Calu3 (cell line): ENCODE measurements at regions of chr10 and their contacts with region 1.

Region 1: DNA sequence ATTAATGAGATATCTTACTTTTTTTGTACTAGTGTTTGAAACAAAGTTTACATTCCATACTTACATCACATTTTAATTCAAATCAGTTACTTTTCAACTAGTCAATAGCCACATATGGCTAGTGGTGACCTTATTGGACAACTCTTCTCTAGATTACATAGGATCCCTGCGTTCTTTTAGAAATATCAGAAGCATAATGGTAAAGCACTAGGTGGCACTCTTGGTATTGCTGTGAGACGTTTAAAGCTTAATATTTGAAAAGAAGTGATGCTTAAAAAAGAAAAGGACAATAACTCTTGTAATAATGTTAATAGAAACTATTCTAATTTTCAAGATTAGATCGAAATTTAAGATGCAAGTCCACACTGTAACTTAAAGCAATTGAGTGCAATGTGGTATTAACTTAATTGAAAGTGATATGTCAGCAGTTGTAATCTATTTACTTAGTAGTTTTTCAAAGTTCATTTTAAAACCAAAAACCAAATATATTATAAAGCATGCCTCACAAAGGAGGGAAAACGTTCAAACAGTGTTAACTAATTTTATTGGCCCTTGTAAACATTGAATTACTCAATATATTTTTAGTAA is 339.1 kb downstream of the ATRNL1 start:
- DNase-seq: no peak
- H3K4me3 Mint-ChIP-seq: no peak overlapping the region
- H3K27ac Mint-ChIP-seq: no peak overlapping the region
- H3K4me1 Mint-ChIP-seq: no peaks in the 10 kb centered on the region
- H3K27me3 Mint-ChIP-seq: no peaks in the 10 kb centered on the region
- CTCF ChIP-seq: no peak

Region 2: DNA sequence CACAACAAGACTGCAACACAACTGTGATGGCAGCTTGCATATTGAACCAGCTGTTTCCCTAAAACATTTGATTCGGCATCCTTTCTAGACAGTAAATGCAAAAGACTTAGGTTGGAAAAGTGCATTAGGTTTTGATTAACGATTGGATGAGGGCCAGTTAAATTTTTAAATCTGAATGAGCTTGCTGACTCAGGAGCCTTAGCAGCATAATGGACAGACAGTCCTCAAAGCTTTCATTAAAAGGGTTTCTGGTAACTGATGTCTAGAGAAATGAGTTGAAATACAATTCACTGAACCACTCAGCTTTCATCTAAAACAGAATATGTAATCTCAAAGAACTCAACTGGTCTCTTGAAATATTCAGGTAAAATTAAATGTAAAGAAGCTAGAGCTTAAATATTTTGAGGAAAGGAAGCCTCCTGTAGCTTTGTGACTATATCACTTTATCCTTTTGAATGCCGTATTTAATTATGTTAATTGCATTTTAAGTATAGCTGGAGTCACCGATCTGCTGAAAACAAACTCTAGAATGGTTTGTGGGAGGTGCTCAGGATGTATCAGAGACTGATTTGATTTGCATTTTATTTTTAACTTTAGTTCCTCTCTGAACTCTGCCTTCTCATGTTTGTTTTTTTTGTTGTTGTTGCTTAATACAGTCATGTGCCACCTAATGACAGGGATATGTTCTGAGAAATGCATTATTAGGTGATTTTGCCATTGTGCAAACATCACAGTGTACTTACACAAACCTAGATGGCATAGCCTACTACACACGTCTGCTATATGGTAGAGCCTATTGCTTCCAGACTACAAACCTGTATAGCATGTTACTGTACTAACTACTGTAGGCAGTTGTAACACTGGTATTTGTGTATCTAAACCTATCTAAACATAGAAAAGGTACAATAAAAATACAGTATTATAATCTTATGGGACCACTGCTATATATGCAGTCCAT is 368.3 kb before region 1 on chr10:
- CTCF ChIA-PET with region 1: no interaction called
- intact Hi-C with region 1: no loop called
- DNase-seq: no peak
- H3K4me3 Mint-ChIP-seq: no peak overlapping the region
- H3K27ac Mint-ChIP-seq: no peak overlapping the region
- H3K4me1 Mint-ChIP-seq: peaks cover 8% of the 10 kb centered on the region
- H3K27me3 Mint-ChIP-seq: peaks cover 33% of the 10 kb centered on the region
- CTCF ChIP-seq: no peak

Region 3: DNA sequence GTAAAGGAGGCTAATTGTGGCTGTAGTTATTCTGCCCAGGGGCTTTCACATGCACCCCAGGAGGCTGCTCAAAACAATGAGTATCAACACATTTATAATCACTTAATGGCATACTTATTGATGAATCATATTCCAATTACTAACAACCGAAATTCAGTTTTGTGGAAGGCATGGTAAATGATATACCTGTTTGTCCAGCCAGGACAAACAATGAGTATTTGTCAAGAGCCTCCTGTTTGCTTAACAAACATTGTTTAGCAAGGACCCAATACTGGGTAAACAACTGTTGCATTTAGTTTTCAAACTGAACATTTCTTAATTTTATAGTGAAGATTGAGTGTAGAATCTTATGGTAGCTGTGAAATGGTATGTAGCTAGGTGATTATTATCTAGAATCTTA is 134.5 kb after region 1 on chr10:
- CTCF ChIA-PET with region 1: no interaction called
- intact Hi-C with region 1: loop called (anchors 5 kb)
- DNase-seq: peak; percentile 2
- H3K4me3 Mint-ChIP-seq: no peak overlapping the region
- H3K27ac Mint-ChIP-seq: no peak overlapping the region
- H3K4me1 Mint-ChIP-seq: no peaks in the 10 kb centered on the region
- H3K27me3 Mint-ChIP-seq: no peaks in the 10 kb centered on the region
- CTCF ChIP-seq: no peak

Region 4: DNA sequence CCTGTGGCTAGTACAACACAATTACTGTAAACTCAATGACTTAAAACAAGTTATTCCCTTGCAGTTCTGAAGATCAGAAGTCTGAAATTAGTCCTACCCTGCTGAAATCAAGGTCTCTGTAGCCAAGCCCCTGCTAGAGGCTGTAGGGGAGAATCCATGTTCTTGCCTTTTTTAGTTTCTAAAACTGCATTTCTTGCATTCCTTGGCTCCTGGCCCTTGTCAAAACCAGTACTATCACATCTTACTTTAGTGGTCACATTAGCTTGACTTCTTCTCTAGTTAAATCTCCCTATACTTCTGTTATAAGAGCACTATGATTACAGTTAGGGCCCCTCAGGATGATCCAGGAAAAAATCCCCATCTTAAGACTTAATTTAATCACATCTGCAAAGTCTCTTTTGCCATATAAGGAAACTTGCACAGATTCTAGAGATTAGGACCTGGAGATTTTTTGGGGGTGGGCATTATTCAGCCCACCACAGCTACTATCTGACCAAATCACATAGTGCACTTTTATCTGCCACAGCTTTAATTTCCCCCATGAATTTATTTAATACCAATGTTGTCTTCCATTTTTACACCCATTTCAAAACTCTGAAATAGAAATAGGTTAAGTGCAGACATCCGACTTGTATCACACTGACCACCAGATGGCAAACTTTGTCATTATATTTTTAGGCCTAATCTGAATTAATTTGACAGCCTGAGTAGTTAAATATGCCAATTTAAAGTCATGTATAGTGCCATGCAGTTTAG is 273.9 kb after region 1 on chr10:
- CTCF ChIA-PET with region 1: no interaction called
- intact Hi-C with region 1: loop called (anchors 1 kb)
- DNase-seq: peak; percentile 2
- H3K4me3 Mint-ChIP-seq: no peak overlapping the region
- H3K27ac Mint-ChIP-seq: no peak overlapping the region
- H3K4me1 Mint-ChIP-seq: no peaks in the 10 kb centered on the region
- H3K27me3 Mint-ChIP-seq: no peaks in the 10 kb centered on the region
- CTCF ChIP-seq: no peak

Region 5: GRCh38 chr10:115801992-115802391 is 369.7 kb after region 1 on chr10:
- CTCF ChIA-PET with region 1: no interaction called
- intact Hi-C with region 1: loop called (anchors 10 kb)
- DNase-seq: no peak
- H3K4me3 Mint-ChIP-seq: no peak overlapping the region
- H3K27ac Mint-ChIP-seq: no peak overlapping the region
- H3K4me1 Mint-ChIP-seq: no peaks in the 10 kb centered on the region
- H3K27me3 Mint-ChIP-seq: no peaks in the 10 kb centered on the region
- CTCF ChIP-seq: no peak

Region 6: GRCh38 chr10:116287906-116288501 is 855.7 kb after region 1 on chr10:
- CTCF ChIA-PET with region 1: no interaction called
- intact Hi-C with region 1: loop called (anchors 1 kb)
- DNase-seq: peak; percentile 23
- H3K4me3 Mint-ChIP-seq: no peak overlapping the region
- H3K27ac Mint-ChIP-seq: no peak overlapping the region
- H3K4me1 Mint-ChIP-seq: no peaks in the 10 kb centered on the region
- H3K27me3 Mint-ChIP-seq: peaks cover 45% of the 10 kb centered on the region
- CTCF ChIP-seq: no peak

Region 7: GRCh38 chr10:116385994-116386809 is 953.9 kb after region 1 on chr10:
- CTCF ChIA-PET with region 1: no interaction called
- intact Hi-C with region 1: loop called (anchors 1 kb)
- DNase-seq: peak; percentile 5
- H3K4me3 Mint-ChIP-seq: no peak overlapping the region
- H3K27ac Mint-ChIP-seq: no peak overlapping the region
- H3K4me1 Mint-ChIP-seq: no peaks in the 10 kb centered on the region
- H3K27me3 Mint-ChIP-seq: peaks cover 24% of the 10 kb centered on the region
- CTCF ChIP-seq: peak; percentile 18